Right ventricle myocardium inferior (tissue), 1 donor: ENCODE measurements at regions of chr13 and their contacts with region 1.

Region 1: GRCh38 chr13:75855847-75856246 is 219.7 kb downstream of the LMO7 start:
- DNase-seq: no peak
- ATAC-seq: no peak

Region 2: DNA sequence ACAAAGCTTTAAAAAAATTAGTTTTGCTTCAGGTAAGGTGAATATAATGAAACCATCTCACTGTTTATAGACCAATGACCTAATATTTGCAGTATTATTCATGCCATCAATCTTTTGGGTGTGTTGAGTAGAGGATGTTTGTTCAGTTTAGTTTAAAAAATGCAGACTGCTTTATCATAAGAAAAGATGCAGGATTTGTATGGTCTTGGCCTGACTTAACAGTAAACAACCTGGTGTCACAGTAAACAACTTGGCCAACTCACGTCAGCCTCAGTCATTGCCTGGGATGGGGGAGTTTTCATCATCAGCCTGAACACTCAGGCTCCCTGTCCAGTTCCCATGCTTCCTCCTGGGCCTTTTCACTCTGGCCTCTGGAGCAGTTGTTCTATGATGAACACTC is 164.7 kb before region 1 on chr13:
- intact Hi-C with region 1: loop called (anchors 5 kb)
- DNase-seq: no peak
- ATAC-seq: no peak

Region 3: DNA sequence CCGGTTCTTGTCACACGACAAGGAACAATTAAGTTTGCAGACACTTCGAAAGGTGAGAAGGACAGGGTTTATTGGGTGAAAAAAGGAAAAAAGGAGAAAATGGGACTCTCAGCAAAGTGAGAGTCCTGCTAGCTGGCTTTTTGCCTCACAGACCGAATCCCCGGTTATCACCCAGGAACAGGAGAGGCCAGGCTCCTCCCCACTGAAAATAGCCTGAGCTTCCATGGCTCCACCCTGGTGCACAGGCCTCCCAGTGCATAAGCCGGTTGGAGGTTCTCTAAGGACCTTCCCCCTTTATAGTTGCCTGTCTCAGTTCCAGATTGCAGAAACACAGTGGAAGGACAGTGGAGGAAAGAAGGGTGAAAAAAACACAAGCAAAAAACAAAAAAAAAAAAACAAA is 458.6 kb after region 1 on chr13:
- intact Hi-C with region 1: no loop called
- DNase-seq: no peak
- ATAC-seq: no peak